MCF 10A (cell line): ENCODE measurements at regions of chr11 and their contacts with region 1.

Region 1: GRCh38 chr11:12288212-12288930 is 89.0 kb upstream of the PARVA start:
- DNase-seq: peak; percentile 91
- H3K4me3 Mint-ChIP-seq: peak overlapping the region; percentile 26
- H3K27ac Mint-ChIP-seq: peak overlapping the region; percentile 20
- H3K4me1 Mint-ChIP-seq: peaks cover 42% of the 10 kb centered on the region
- H3K27me3 Mint-ChIP-seq: no peaks in the 10 kb centered on the region
- CTCF ChIP-seq: peak; percentile 91

Region 2: DNA sequence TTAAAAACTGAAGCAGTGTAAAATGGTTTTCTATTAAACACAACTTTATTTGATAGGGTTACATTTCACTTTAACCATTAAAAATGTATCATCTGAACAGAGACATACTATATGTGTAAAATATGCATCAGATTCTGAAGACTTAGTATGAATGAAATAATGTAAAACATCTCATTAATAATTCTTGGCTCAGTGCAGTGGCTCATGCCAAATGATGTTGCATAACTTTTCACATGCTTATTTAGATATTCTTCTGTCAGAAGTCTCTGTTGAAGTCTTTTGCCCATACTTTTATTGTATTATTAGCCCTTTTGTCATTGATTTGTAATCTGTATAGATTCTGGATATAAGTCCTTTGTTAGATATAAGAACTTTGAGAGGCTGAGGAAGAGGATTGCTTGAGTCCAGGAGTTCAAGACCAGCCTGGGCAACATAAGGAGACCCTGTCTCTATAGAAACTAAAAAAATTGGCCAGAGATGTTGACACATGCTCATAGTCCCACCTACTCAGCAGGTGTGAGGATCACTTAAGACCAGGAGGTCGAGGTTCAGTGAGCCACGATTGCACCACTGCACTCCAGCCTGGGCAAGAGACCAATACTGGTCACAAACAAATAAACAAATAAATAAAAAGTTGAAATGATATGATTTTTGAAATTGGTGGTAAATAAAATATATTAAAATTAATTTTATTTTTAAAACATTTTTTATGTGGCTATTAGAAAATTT is 15.2 kb after region 1 on chr11:
- CTCF ChIA-PET with region 1: interaction called, 12 read pairs
- POLR2A ChIA-PET with region 1: interaction called, 3 read pairs
- intact Hi-C with region 1: no loop called
- DNase-seq: no peak
- H3K4me3 Mint-ChIP-seq: no peak overlapping the region
- H3K27ac Mint-ChIP-seq: no peak overlapping the region
- H3K4me1 Mint-ChIP-seq: no peaks in the 10 kb centered on the region
- H3K27me3 Mint-ChIP-seq: no peaks in the 10 kb centered on the region
- CTCF ChIP-seq: no peak

Region 3: GRCh38 chr11:12377824-12378593 is 89.6 kb after region 1 on chr11:
- CTCF ChIA-PET with region 1: no interaction called
- POLR2A ChIA-PET with region 1: interaction called, 4 read pairs
- intact Hi-C with region 1: loop called (anchors 2 kb)
- DNase-seq: peak; percentile 90
- H3K4me3 Mint-ChIP-seq: peak overlapping the region; percentile 92
- H3K27ac Mint-ChIP-seq: peak overlapping the region; percentile 97
- H3K4me1 Mint-ChIP-seq: peaks cover 7% of the 10 kb centered on the region
- H3K27me3 Mint-ChIP-seq: no peaks in the 10 kb centered on the region
- CTCF ChIP-seq: no peak

Region 4: GRCh38 chr11:12411806-12412727 is 123.7 kb after region 1 on chr11:
- CTCF ChIA-PET with region 1: no interaction called
- POLR2A ChIA-PET with region 1: no interaction called
- intact Hi-C with region 1: no loop called
- DNase-seq: peak; percentile 68
- H3K4me3 Mint-ChIP-seq: no peak overlapping the region
- H3K27ac Mint-ChIP-seq: peak overlapping the region; percentile 63
- H3K4me1 Mint-ChIP-seq: peaks cover 17% of the 10 kb centered on the region
- H3K27me3 Mint-ChIP-seq: no peaks in the 10 kb centered on the region
- CTCF ChIP-seq: peak; percentile 57

Region 5: GRCh38 chr11:12893787-12894672 is 605.7 kb after region 1 on chr11:
- CTCF ChIA-PET with region 1: interaction called, 14 read pairs
- POLR2A ChIA-PET with region 1: no interaction called
- intact Hi-C with region 1: loop called (anchors 1 kb)
- DNase-seq: peak; percentile 55
- H3K4me3 Mint-ChIP-seq: no peak overlapping the region
- H3K27ac Mint-ChIP-seq: peak overlapping the region; percentile 85
- H3K4me1 Mint-ChIP-seq: peaks cover 12% of the 10 kb centered on the region
- H3K27me3 Mint-ChIP-seq: no peaks in the 10 kb centered on the region
- CTCF ChIP-seq: peak; percentile 73

Region 6: GRCh38 chr11:13152736-13153533 is 864.6 kb after region 1 on chr11:
- CTCF ChIA-PET with region 1: interaction called, 3 read pairs
- POLR2A ChIA-PET with region 1: no interaction called
- intact Hi-C with region 1: loop called (anchors 1 kb)
- DNase-seq: peak; percentile 60
- H3K4me3 Mint-ChIP-seq: no peak overlapping the region
- H3K27ac Mint-ChIP-seq: no peak overlapping the region
- H3K4me1 Mint-ChIP-seq: no peaks in the 10 kb centered on the region
- H3K27me3 Mint-ChIP-seq: no peaks in the 10 kb centered on the region
- CTCF ChIP-seq: peak; percentile 55